SK-N-SH (cell line): ENCODE measurements at regions of chr10 and their contacts with region 1.

Region 1: GRCh38 chr10:110137142-110137545 is 70.3 kb upstream of the MXI1 start:
- DNase-seq: peak; percentile 59
- H3K4me3 ChIP-seq: no peak overlapping the region
- H3K27ac ChIP-seq: peak overlapping the region in 1 of 2 experiments; percentile 39; a peak in 1 of 4 replicates
- H3K4me1 ChIP-seq: peaks cover 0 to 5% of the 10 kb centered on the region in 2 experiments; a peak in 1 of 4 replicates
- H3K27me3 ChIP-seq: no peaks in the 10 kb centered on the region
- CTCF ChIP-seq: peak; percentile 80
- EP300 ChIP-seq: no peak
- RAD21 ChIP-seq: peak; percentile 89

Region 2: DNA sequence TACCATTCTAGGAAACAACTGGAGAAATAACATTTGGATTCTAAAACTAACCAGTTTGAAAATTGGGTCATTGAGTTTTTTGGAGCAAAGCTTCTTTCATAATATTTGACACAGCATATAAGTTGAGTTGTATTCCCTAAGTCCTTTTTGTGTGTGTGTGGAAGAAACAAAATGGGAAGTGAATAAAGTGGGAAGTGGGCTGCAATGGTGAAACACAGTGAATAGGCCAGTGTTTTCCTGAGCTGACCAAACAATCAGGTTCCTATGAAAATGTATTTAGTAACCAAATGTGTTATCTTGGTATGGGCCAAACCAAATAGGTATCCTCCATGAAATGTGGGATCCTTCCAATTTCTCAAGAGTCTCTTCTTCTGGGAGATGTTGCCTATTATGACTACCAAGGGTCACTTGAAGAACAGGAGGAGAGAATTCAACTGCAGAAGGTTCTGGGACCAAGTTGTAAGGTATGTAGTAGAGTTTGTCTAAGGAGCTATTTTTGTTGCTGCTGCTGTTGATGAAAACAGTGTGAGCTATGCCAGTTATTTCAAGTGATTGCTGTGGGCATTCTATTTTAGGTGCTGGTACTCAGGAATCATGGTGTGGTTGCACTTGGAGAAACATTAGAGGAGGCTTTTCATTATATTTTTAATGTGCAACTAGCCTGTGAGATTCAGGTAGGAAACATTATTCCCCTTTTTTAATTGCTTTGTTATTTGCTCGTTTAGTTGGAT is 18.1 kb before region 1 on chr10:
- CTCF ChIA-PET with region 1: interaction called, 12 read pairs
- POLR2A ChIA-PET with region 1: no interaction called
- DNase-seq: no peak
- H3K4me3 ChIP-seq: no peak overlapping the region
- H3K27ac ChIP-seq: peak overlapping the region in 1 of 2 experiments; percentile 43; a peak in 2 of 4 replicates
- H3K4me1 ChIP-seq: no peaks in the 10 kb centered on the region; a peak in 1 of 4 replicates
- H3K27me3 ChIP-seq: no peaks in the 10 kb centered on the region
- CTCF ChIP-seq: no peak
- EP300 ChIP-seq: no peak
- RAD21 ChIP-seq: no peak

Region 3: DNA sequence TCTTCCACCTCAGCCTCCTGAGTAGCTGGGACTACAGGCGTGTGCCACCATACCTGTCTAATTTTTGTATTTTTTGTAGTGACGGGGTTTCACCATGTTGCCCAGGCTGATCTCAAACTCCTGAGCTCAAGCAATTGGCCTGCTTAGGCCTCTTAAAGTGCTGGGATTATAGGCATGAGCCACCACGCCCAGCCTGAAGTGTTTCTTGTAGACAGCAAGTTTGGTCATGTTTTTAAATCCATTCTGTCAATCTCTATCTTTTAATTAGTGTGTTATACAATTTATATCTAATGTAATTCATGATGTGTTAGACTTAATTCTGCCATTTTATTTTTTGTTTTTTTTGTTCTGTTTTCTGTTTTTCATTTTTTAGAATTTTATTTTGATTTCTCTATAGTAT is 53.0 kb after region 1 on chr10:
- CTCF ChIA-PET with region 1: no interaction called
- POLR2A ChIA-PET with region 1: no interaction called
- DNase-seq: no peak
- H3K4me3 ChIP-seq: no peak overlapping the region
- H3K27ac ChIP-seq: no peak overlapping the region
- H3K4me1 ChIP-seq: no peaks in the 10 kb centered on the region
- H3K27me3 ChIP-seq: 0 out of 2 replicates have a peak, but pooled peaks cover 4% of the 10 kb centered on the region
- CTCF ChIP-seq: no peak
- EP300 ChIP-seq: no peak
- RAD21 ChIP-seq: no peak

Region 4: DNA sequence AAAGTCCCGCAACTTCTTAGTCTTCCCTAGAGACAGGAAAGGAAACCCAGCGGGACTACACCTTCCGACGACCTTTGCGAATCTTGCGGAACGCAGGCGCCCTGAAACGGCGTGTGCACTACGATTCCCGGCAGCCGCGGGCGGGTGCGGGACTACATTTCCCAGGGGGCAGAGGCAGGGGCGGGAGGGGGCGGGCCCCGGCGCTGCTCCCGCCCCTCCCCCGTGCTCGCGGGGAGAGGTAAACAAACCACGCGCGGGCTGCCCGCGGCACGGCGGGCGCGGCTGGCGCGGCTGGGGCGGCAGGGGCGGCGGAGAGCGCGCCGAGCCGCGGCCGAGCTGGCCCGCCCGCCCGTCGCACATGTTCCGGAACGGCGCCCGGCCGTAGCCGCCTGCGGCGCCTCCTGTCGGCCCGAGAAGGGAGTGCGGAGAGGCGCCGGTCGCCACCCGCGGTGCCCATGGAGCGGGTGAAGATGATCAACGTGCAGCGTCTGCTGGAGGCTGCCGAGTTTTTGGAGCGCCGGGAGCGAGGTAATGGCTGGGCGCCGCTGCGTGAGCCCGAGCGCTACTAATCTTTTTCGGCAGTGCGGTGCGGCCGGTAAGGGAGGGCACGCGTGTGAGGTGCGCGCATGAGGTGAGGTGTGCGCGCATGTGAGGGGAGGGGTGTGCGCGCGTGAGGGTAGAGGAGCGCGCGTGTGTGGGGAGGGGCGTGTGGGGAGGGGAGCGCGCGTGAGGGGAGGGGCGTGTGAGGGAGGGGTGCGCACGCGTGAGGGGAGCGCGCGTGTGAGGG is 88.8 kb after region 1 on chr10:
- CTCF ChIA-PET with region 1: interaction called, 32 read pairs
- POLR2A ChIA-PET with region 1: no interaction called
- DNase-seq: peak; percentile 93
- H3K4me3 ChIP-seq: peak overlapping the region; percentile 71 to 83
- H3K27ac ChIP-seq: peak overlapping the region; percentile 75 to 93; a peak in 3 of 4 replicates
- H3K4me1 ChIP-seq: peaks cover 0 to 10% of the 10 kb centered on the region in 2 experiments; a peak in 2 of 4 replicates
- H3K27me3 ChIP-seq: no peaks in the 10 kb centered on the region
- CTCF ChIP-seq: peak; percentile 64
- EP300 ChIP-seq: no peak
- RAD21 ChIP-seq: peak; percentile 38

Region 5: GRCh38 chr10:110273474-110273873 is 136.3 kb after region 1 on chr10:
- CTCF ChIA-PET with region 1: interaction called, 44 read pairs
- POLR2A ChIA-PET with region 1: no interaction called
- DNase-seq: no peak
- H3K4me3 ChIP-seq: no peak overlapping the region
- H3K27ac ChIP-seq: no peak overlapping the region
- H3K4me1 ChIP-seq: peaks cover 3 to 5% of the 10 kb centered on the region in 2 experiments; a peak in 3 of 4 replicates
- H3K27me3 ChIP-seq: no peaks in the 10 kb centered on the region
- CTCF ChIP-seq: no peak
- EP300 ChIP-seq: no peak
- RAD21 ChIP-seq: no peak

Region 6: DNA sequence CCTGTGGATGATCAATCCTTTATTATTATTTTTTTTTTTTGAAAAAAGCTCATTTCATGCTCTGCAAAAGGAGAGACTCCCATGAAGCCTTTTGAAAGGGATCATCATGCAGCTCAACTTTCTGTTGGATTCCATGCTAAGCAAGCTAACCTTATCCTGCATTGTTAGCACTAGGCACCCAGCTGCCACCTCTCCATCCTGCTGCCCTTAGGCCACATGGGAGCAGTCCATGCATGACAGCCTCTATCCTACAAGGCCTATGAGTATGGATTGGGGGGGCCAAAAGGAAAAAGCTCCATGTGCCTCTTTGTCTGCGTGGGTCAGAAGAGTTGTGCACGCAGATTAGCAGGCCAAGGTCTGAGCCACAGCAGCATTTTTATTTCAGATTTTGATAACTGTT is 148.4 kb after region 1 on chr10:
- CTCF ChIA-PET with region 1: interaction called, 44 read pairs
- POLR2A ChIA-PET with region 1: no interaction called
- DNase-seq: no peak
- H3K4me3 ChIP-seq: no peak overlapping the region
- H3K27ac ChIP-seq: no peak overlapping the region
- H3K4me1 ChIP-seq: no peaks in the 10 kb centered on the region; a peak in 1 of 4 replicates
- H3K27me3 ChIP-seq: no peaks in the 10 kb centered on the region
- CTCF ChIP-seq: no peak
- EP300 ChIP-seq: no peak
- RAD21 ChIP-seq: no peak